ENCODE measurements at regions of chr9 and their contacts with region 1.

Region 1: DNA sequence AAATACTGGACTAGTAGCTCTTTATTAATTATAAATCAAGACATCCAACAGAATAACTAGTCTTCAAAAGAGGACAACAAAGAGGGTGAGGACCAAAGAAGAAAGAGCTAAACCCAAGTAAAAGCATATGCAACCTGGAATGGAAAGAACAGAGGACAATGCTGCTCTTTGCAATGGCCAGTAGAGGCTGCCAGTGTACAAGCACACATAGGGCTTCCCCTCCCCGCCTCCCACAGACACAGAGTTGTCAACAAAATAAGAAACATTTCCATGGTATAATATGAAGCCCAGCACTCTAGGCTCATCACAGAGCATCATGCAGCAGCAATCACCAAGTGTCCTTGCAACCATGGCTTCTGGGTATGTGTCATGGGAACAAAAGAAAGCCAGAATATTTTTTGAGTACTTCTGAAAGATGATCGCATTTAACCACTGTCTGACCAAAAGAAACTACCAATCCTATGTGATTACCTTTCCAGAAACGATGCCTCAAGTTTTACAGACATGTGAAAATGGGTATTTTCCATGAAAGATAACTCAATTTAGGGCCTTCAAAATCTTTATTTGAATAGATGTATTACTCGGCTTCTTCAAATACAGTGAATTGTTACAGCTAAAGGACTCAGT is 58.1 kb downstream of the RFX3 start:
- DNase-seq: peak; percentile 16
- H3K4me3 ChIP-seq: no peak overlapping the region
- H3K27ac ChIP-seq: no peak overlapping the region
- H3K4me1 ChIP-seq: peaks cover 0 to 12% (median 0%) of the 10 kb centered on the region in 3 donors
- H3K27me3 ChIP-seq: no peaks in the 10 kb centered on the region
- CTCF ChIP-seq: peak in 5 of 6 experiments; percentile 51 to 79 (median 61)
- POLR2A ChIP-seq: no peak

Region 2: GRCh38 chr9:3528451-3528850 is 60.7 kb after region 1 on chr9:
- intact Hi-C with region 1: no loop called
- DNase-seq: no peak
- H3K4me3 ChIP-seq: peak overlapping the region in 2 of 4 donors; percentile 15 to 36
- H3K27ac ChIP-seq: peak overlapping the region in 3 of 4 donors; percentile 25 to 100 (median 98)
- H3K4me1 ChIP-seq: peaks cover 9 to 42% (median 19%) of the 10 kb centered on the region in 3 donors
- H3K27me3 ChIP-seq: no peaks in the 10 kb centered on the region
- CTCF ChIP-seq: no peak
- POLR2A ChIP-seq: no peak

Region 3: DNA sequence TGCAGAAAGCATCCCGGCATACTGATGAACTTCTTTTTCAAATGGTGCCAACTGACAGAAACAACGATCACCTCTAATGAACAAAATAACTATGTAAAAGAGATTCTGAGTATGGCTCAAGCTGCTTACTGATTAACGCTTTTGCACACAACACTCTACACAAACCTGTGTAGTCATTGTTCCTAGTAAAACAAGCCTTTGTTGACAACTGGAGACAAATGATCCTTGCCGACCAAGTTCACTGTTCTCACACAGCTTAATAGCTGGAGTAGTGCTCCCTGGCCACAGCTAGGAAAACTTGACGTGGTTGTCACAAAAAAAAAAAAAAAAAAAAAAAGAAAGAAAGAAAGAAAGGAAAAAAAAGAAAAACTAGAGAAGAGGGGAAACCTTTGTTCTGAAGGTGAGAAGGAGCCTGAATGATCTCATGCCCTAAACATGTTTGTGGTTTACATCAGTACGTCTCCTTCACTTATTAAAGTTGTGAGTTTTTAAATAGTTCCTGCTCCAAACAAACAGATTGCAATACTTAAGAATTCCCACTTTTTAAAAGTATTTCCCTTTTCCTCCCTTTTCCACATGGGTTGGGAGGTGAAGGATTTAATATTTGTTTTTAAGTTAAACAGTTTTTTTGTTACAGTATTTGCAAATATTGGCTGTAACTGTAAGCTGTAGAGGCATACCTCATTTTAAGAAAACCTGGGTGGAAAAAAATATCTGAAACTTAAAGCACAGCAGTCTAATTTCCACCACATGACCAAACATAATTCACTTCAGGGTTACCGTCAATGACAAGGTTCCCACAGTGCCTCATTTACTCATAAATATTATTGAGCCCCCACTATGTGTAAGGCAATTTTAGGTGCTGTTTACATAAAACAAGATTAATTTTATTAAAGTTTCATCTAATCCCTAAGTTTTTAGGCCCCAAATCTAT is 768.4 kb after region 1 on chr9:
- intact Hi-C with region 1: loop called (anchors 10 kb)
- DNase-seq: no peak
- H3K4me3 ChIP-seq: no peak overlapping the region
- H3K27ac ChIP-seq: no peak overlapping the region
- H3K4me1 ChIP-seq: peaks cover 0 to 6% (median 0%) of the 10 kb centered on the region in 3 donors
- H3K27me3 ChIP-seq: no peaks in the 10 kb centered on the region
- CTCF ChIP-seq: no peak
- POLR2A ChIP-seq: no peak

Measured in esophagus squamous epithelium (tissue), 5 donors.